ENCODE measurements at regions of chr2 and their contacts with region 1.

Region 1: DNA sequence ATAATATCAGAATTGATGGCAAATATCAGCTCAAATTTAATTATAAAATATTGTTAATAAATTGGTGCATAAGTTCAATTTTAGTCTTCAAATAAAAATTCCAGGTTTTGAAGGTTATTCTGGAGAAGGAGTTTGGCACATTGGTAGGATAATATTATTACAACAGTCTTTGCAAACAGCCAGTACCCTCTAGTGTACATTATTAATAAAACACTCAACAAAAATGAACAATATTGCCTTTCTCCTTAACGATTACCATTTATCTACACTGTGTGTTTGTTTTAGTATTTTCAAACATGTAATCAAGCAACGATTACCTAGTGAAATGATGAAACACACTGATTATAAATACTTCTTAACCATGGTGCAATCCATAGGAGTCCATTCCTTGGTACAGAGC is 334.0 kb upstream of the FSIP2 start:
- DNase-seq: no peak
- H3K4me3 ChIP-seq: no peak overlapping the region
- H3K27ac ChIP-seq: no peak overlapping the region
- H3K4me1 ChIP-seq: no peaks in the 10 kb centered on the region
- H3K27me3 ChIP-seq: no peaks in the 10 kb centered on the region
- CTCF ChIP-seq: no peak

Region 2: DNA sequence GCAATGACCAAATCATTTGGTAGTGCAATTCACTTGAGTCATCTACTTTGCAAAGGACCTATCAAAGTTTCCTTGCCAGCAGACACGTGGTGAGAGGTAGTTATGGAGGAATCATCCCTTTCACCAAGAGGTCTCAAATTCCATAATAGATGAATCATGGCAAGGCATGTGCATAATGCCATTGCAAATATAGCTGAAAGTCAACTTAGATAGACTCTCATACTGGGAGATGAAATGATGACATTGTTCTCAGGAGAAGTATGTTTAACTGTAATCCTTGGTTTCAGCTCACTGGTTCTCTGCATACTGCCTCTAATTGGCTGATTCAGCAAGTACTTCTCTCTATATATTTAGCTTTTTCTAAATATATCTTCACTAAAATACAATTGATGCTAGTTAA is 1986.3 kb after region 1 on chr2:
- CTCF ChIA-PET with region 1: no interaction called
- POLR2A ChIA-PET with region 1: interaction called, 10 read pairs
- intact Hi-C with region 1: no loop called
- DNase-seq: peak; percentile 1 to 56
- H3K4me3 ChIP-seq: no peak overlapping the region
- H3K27ac ChIP-seq: no peak overlapping the region
- H3K4me1 ChIP-seq: no peaks in the 10 kb centered on the region
- H3K27me3 ChIP-seq: no peaks in the 10 kb centered on the region
- CTCF ChIP-seq: no peak